Psoas muscle (tissue), 8 donors: ENCODE measurements at regions of chr11 and their contacts with region 1.

Region 1: DNA sequence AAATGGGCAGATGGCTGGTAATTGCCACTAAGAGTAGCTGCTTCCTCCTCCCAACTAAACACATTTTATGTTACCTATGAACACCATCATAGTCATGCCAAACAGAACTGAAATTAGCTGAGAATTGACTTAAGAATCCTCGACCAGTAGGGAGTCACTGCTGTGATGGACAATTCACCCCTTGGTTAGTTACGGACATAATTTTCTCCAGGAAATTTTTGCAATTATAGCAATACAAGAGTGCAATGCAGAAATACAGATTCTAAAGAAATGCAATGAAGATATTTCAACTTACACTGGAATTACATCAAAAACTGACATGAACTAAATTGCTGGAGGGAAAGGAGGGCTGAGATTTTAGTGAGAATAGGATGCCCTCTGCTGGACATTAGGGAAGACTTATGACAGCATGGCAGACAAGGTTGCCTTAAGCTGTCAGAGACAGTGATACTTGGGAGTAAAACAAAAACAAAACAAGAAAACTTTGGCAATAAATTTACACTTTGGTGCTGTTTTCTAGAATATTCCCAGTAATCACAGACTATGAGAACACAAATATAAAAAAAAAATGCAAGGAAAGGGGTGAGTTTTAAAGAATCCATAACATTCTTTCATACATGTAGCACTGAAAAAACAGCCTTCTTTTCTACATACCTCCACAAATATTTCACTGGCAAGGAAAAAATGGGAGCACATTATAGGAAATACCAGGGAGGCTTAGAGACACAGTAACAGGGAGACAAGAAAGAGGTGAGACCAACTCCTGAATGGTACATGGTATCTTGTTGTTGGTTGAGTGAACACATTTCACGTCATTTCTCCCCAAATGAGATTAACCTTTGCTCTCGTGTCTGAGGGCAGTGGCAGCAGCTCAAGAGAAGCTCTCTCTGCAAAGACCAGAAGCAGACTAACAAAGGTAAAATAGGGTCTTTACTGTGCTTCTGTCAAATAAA is 11.2 kb upstream of the PPP2R1B start:
- DNase-seq: no peak
- ATAC-seq: peak; percentile 85 to 93 (median 88)
- H3K4me3 ChIP-seq: no peak overlapping the region
- H3K27ac ChIP-seq: no peak overlapping the region
- H3K4me1 ChIP-seq: no peaks in the 10 kb centered on the region
- H3K27me3 ChIP-seq: no peaks in the 10 kb centered on the region
- CTCF ChIP-seq: peak; percentile 80

Region 2: DNA sequence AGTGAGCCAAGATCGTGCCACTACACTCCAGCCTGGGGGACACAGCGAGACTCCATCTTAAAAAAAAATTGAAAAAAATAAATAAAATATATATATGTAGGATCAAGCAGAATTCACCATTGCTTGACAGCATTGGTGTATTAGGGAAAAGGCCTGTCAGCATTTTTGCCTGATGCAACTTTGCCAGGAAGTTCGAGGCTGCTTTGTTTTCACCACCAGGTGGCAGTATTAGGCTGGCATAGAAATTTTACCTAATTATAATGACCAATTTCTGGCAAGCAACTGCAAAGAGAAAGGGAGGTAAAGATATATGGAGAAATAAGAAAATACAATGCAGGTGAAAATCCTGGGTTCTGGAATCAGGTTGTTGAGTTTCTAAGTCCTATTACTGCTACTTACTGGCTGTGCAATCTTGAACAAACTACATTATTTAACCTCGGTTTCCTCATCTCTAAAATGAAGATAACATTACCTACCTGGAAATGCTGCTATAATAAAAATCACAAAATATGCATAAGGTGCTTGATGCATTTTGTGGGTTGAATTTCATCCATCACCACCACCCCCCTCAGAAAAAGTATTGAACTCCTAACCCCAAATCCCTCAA is 212.2 kb before region 1 on chr11:
- intact Hi-C with region 1: loop called in 1 of 2 experiments (anchors 5 kb)
- DNase-seq: peak in 1 of 2 donors; percentile 27
- ATAC-seq: peak; percentile 60 to 88 (median 75)
- H3K4me3 ChIP-seq: no peak overlapping the region
- H3K27ac ChIP-seq: no peak overlapping the region
- H3K4me1 ChIP-seq: peaks cover 8% of the 10 kb centered on the region
- H3K27me3 ChIP-seq: no peaks in the 10 kb centered on the region
- CTCF ChIP-seq: peak; percentile 96

Region 3: DNA sequence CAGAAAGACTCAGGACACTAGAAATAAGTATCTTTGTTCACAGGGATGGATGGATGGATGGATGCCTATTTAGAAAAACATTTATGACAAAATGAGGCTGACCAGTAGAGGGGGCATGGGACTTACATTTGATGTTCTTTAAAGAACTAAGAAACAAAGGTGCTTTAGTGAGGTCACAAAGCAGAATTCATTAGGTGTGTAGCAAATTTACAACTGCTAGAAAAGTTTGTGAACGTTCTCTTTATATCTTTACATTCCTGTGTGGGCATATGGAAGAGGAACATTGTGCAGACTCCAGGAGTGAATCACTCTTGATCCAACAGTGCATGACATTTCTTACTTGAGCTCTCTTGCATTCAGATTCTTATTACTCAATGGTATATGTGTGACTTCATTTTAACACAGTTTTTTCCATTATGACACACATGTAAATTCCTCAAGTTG is 191.0 kb before region 1 on chr11:
- intact Hi-C with region 1: loop called in 1 of 2 experiments (anchors 5 kb)
- DNase-seq: no peak
- ATAC-seq: peak in 2 of 4 donors; percentile 68 to 71
- H3K4me3 ChIP-seq: no peak overlapping the region
- H3K27ac ChIP-seq: no peak overlapping the region
- H3K4me1 ChIP-seq: no peaks in the 10 kb centered on the region
- H3K27me3 ChIP-seq: no peaks in the 10 kb centered on the region
- CTCF ChIP-seq: peak; percentile 55